Activated CD4-positive, alpha-beta memory T cell treated with anti-CD3 and anti-CD28 coated beads for 36 hours (primary cell): ENCODE measurements at regions of chr2 and their contacts with region 1.

Region 1: DNA sequence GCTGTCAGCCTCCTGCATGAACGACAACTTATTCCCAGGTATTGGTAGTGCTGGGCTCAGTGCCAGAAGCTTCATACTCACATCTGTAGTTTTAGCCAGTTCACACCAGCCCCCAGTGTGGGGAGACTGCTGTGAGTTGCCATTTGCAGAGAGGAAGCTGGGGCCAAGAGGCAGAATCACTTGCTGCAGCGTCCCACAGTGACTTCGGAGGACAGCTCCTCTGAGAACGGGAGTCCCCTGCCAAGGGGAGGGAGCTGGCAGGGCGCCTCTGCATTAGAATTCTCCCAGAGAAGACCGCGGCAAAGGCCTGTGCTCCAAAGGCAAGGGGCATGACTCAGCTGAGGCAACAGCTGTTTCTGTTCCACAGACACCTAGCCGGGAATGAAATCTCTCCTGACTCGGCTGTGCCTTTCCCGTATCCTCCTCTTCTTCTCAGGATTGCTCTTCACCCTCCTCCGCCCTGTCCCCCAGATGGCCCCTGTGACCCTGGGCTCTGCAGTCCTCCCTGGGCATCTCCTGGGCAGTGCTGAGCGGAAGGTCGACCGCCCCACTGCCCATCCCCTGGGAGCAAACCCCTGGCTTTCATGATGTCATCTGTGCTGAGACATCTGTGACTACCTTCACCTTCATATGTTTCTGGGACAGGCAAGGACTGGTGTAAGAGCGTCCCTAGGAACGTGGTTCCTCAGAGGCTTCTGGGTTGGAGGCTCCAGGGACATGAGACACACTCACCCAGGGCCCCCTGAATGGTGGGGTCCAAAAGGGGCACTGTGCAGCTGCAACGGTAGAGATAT is 18.0 kb downstream of the MAL start:
- DNase-seq: peak; percentile 79
- H3K4me3 Mint-ChIP-seq: no peak overlapping the region
- H3K27ac Mint-ChIP-seq: peak overlapping the region; percentile 59
- H3K4me1 Mint-ChIP-seq: peaks cover 72% of the 10 kb centered on the region
- H3K27me3 Mint-ChIP-seq: no peaks in the 10 kb centered on the region

Region 2: DNA sequence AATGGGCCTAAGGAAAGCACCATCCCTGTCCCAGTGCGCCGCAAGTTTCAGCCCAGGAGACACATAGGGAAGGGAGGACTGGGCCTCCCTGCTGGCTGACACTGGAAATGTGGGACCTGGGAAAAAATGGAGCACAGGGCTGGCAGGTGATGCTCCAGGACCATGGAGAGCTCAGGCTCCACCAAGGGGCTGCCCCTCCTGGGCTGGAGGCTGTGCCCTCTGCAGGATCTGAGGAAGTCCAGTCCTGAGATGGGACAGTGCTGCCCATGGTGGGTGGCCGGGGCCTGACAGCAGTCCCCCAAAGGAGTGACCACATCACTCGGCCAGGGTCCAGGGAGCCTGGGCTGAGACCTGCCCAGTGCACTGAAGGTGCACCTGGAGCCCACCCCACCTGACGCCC is 280.9 kb before region 1 on chr2:
- CTCF ChIA-PET with region 1: no interaction called
- POLR2A ChIA-PET with region 1: no interaction called
- intact Hi-C with region 1: no loop called
- DNase-seq: no peak
- H3K4me3 Mint-ChIP-seq: no peak overlapping the region
- H3K27ac Mint-ChIP-seq: no peak overlapping the region
- H3K4me1 Mint-ChIP-seq: peaks cover 7% of the 10 kb centered on the region
- H3K27me3 Mint-ChIP-seq: no peaks in the 10 kb centered on the region

Region 3: DNA sequence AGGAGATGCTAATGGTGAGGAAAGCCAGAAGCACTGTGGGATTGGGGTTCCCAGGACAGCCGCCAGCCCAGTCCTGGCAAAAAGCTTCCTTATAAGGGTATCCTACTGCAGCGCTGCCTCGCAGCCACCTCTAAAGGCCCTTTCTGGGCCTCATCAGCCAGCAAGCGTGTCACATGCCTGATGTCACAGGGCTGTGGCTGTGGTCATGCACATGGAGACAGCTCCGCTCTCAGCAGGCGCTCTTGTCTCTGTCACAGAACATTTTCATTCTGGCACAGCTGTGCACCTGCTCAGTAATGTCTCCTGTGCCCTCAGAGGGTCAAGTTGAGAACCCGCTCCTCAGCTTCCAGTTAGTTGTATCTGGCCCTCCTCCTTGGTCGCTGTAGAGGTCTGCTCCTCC is 35.7 kb before region 1 on chr2:
- CTCF ChIA-PET with region 1: no interaction called
- POLR2A ChIA-PET with region 1: no interaction called
- intact Hi-C with region 1: no loop called
- DNase-seq: no peak
- H3K4me3 Mint-ChIP-seq: no peak overlapping the region
- H3K27ac Mint-ChIP-seq: no peak overlapping the region
- H3K4me1 Mint-ChIP-seq: no peaks in the 10 kb centered on the region
- H3K27me3 Mint-ChIP-seq: peaks cover 4% of the 10 kb centered on the region

Region 4: GRCh38 chr2:95053543-95053942 is 10.0 kb after region 1 on chr2:
- CTCF ChIA-PET with region 1: interaction called, 15 read pairs
- POLR2A ChIA-PET with region 1: interaction called, 4 read pairs
- intact Hi-C with region 1: loop called (anchors 2 kb)
- DNase-seq: no peak
- H3K4me3 Mint-ChIP-seq: no peak overlapping the region
- H3K27ac Mint-ChIP-seq: no peak overlapping the region
- H3K4me1 Mint-ChIP-seq: peaks cover 56% of the 10 kb centered on the region
- H3K27me3 Mint-ChIP-seq: no peaks in the 10 kb centered on the region

Region 5: GRCh38 chr2:95799892-95800291 is 756.4 kb after region 1 on chr2:
- CTCF ChIA-PET with region 1: no interaction called
- POLR2A ChIA-PET with region 1: no interaction called
- intact Hi-C with region 1: no loop called
- DNase-seq: no peak
- H3K4me3 Mint-ChIP-seq: no peak overlapping the region
- H3K27ac Mint-ChIP-seq: no peak overlapping the region
- H3K4me1 Mint-ChIP-seq: no peaks in the 10 kb centered on the region
- H3K27me3 Mint-ChIP-seq: no peaks in the 10 kb centered on the region